A673 (cell line): ENCODE measurements at regions of chr6 and their contacts with region 1.

Region 1: GRCh38 chr6:49606696-49607390 is 29.8 kb downstream of the RHAG start:
- DNase-seq: peak; percentile 95
- H3K4me3 ChIP-seq: peak overlapping the region; percentile 7
- H3K27ac ChIP-seq: no peak overlapping the region
- H3K4me1 ChIP-seq: peaks cover 5% of the 10 kb centered on the region
- H3K27me3 ChIP-seq: no peaks in the 10 kb centered on the region
- CTCF ChIP-seq: peak; percentile 93

Region 2: GRCh38 chr6:49348561-49348960 is 258.3 kb before region 1 on chr6:
- CTCF ChIA-PET with region 1: no interaction called
- POLR2A ChIA-PET with region 1: no interaction called
- intact Hi-C with region 1: no loop called
- DNase-seq: no peak
- H3K4me3 ChIP-seq: no peak overlapping the region
- H3K27ac ChIP-seq: no peak overlapping the region
- H3K4me1 ChIP-seq: no peaks in the 10 kb centered on the region
- H3K27me3 ChIP-seq: no peaks in the 10 kb centered on the region
- CTCF ChIP-seq: no peak

Region 3: DNA sequence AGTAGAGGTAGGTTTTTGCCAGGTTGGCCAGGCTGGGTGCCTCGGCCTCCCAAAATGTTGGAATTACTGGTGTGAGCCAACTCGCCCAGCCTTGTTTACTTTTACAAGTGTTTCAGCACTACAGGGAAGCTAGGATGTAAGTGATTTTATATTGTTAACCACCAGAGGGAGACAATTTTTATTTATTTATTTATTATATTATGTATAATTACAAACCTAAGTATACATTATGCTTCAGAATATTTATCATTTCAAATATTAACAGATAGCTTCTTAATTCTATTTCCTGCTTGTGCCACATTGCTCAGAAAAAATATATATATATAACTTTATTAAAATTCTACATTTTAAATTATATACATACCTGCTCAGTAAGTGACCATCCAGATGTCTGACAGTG is 153.6 kb before region 1 on chr6:
- CTCF ChIA-PET with region 1: no interaction called
- POLR2A ChIA-PET with region 1: no interaction called
- intact Hi-C with region 1: loop called (anchors 1 kb)
- DNase-seq: peak; percentile 16
- H3K4me3 ChIP-seq: no peak overlapping the region
- H3K27ac ChIP-seq: no peak overlapping the region
- H3K4me1 ChIP-seq: no peaks in the 10 kb centered on the region
- H3K27me3 ChIP-seq: no peaks in the 10 kb centered on the region
- CTCF ChIP-seq: peak; percentile 48; the same call in 1 of the 2 replicates

Region 4: DNA sequence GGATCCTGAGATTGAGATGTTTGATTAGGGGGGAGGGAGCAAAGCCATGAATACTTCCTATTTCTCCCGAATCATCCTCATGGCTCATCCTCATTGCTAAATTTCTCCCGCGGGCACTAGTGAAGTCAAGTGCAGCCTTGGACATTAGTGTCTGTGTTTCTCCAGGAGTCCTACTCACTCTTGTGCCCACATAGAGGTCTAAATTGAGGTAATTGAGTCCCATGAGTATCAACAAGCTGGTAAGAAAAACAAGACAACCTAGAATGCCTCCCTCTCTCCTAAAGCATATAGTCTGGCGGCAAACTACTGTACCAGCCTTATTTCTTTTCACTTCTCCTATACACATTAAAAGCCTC is 143.3 kb before region 1 on chr6:
- CTCF ChIA-PET with region 1: no interaction called
- POLR2A ChIA-PET with region 1: no interaction called
- intact Hi-C with region 1: no loop called
- DNase-seq: no peak
- H3K4me3 ChIP-seq: peak overlapping the region; percentile 66
- H3K27ac ChIP-seq: peak overlapping the region; percentile 92
- H3K4me1 ChIP-seq: peaks cover 8% of the 10 kb centered on the region
- H3K27me3 ChIP-seq: no peaks in the 10 kb centered on the region
- CTCF ChIP-seq: no peak

Region 5: DNA sequence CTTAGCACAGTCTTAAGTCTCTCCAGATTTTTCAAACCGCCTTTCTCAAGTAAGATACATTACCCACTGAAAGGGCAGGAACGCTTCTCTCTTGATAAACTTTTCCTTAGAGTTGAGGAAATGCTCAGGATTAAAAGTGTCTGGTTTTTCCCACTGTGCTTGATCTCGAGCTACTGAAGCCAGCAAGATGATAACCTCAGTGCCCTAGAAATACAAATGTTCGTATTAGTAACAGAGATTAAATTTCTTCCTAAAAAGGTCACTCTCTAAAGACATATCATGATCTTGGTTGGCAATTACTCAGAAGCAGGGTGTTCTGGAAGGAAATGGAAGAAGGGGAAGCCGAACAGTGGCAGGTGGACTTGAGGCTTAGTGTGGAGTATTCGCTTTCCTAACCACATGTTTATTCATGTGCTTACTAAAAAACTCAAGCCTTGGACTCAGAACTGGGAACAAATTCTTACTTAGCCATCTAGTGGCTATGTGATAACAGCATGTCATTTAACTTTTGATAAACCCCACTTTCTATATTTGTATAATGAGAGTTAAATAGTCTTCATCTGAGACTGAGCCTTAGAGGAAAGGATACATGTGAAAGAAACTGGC is 36.3 kb before region 1 on chr6:
- CTCF ChIA-PET with region 1: interaction called, 3 read pairs
- POLR2A ChIA-PET with region 1: interaction called, 3 read pairs
- intact Hi-C with region 1: loop called (anchors 2 kb)
- DNase-seq: peak; percentile 67
- H3K4me3 ChIP-seq: no peak overlapping the region
- H3K27ac ChIP-seq: no peak overlapping the region
- H3K4me1 ChIP-seq: peaks cover 11% of the 10 kb centered on the region
- H3K27me3 ChIP-seq: no peaks in the 10 kb centered on the region
- CTCF ChIP-seq: peak; percentile 51; the same call in 1 of the 2 replicates